ENCODE measurements at regions of chr19 and their contacts with region 1.

Region 1: GRCh38 chr19:7098701-7099596 is 29.4 kb downstream of the ZNF557 start:
- DNase-seq: peak; percentile 72 to 93 (median 90)
- ATAC-seq: peak; percentile 95
- H3K4me3 ChIP-seq: peak overlapping the region; percentile 98
- H3K4me3 Mint-ChIP-seq: peak overlapping the region; percentile 90 to 97 (median 93)
- H3K27ac ChIP-seq: peak overlapping the region; percentile 79
- H3K27ac Mint-ChIP-seq: peak overlapping the region; percentile 88 to 98 (median 94)
- H3K4me1 ChIP-seq: peaks cover 6 to 17% of the 10 kb centered on the region in 2 donors
- H3K4me1 Mint-ChIP-seq: peaks cover 11 to 41% (median 30%) of the 10 kb centered on the region in 7 donors
- H3K27me3 ChIP-seq: no peaks in the 10 kb centered on the region
- H3K27me3 Mint-ChIP-seq: peaks cover 0 to 8% (median 0%) of the 10 kb centered on the region in 5 donors

Region 2: GRCh38 chr19:6424939-6425731 is 673.8 kb before region 1 on chr19:
- CTCF ChIA-PET with region 1: no interaction called
- POLR2A ChIA-PET with region 1: interaction called, 3 read pairs
- intact Hi-C with region 1: loop called in 1 of 2 experiments (anchors 2 kb)
- DNase-seq: peak; percentile 66 to 100 (median 99)
- ATAC-seq: peak; percentile 89
- H3K4me3 ChIP-seq: peak overlapping the region; percentile 39
- H3K4me3 Mint-ChIP-seq: peak overlapping the region; percentile 69 to 87 (median 78)
- H3K27ac ChIP-seq: peak overlapping the region; percentile 77
- H3K27ac Mint-ChIP-seq: peak overlapping the region; percentile 78 to 97 (median 94)
- H3K4me1 ChIP-seq: peaks cover 15 to 32% of the 10 kb centered on the region in 2 donors
- H3K4me1 Mint-ChIP-seq: peaks cover 18 to 48% (median 41%) of the 10 kb centered on the region in 7 donors
- H3K27me3 ChIP-seq: no peaks in the 10 kb centered on the region
- H3K27me3 Mint-ChIP-seq: no peaks in the 10 kb centered on the region

Region 3: DNA sequence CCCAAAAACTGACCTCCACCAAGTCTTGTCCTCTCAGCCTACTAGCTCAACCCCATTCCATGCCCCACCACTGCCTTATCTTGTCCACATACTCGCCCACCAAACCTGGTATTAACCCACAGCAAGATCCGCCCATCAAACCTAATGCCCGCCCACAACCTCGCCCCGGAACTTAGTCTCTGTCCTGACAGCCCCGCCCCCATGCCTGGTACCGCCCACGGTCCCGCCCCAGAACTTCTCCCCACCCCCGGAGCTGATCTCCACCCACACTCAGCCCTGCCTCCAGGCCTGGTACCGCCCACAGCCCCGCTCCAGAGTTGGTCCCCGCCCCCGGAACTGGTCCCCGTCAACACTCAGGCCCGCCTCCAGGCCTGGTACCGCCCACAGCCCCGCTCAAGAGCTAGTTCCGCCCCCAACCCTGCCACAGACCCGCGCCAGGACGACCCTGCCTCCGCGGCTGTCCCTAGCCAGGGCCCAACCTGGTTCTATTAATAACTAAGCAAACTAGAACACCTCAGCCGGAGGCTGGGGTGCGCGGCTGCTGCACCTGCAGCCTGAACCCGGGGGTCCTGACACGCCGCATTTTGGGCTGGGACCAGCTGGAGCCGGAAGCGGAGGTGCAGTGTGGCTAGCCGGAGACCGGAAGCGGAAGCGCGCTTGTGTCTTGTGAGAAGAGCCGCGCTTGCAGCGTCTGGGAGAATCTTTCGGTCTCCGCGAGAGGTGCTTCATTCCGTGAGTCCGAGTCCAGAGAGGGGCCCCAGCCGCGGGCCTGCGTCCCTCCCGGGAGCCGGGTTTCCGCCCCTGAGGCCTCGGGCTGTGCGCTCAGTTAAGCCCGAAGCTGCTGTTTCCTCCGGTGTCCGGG is 29.7 kb before region 1 on chr19 and contains the start of gene ZNF557:
- CTCF ChIA-PET with region 1: interaction called, 3 read pairs
- POLR2A ChIA-PET with region 1: interaction called, 17 read pairs
- intact Hi-C with region 1: loop called (anchors 1 kb)
- DNase-seq: peak; percentile 93 to 100 (median 99)
- ATAC-seq: peak; percentile 99
- H3K4me3 ChIP-seq: peak within 1 kb of the TSS; percentile 100
- H3K4me3 Mint-ChIP-seq: peak within 1 kb of the TSS; percentile 90 to 98 (median 94)
- H3K27ac ChIP-seq: peak within 1 kb of the TSS; percentile 84
- H3K27ac Mint-ChIP-seq: peak within 1 kb of the TSS; percentile 63 to 95 (median 94)
- H3K4me1 ChIP-seq: peaks cover 14% of the 10 kb centered on the region in 2 donors
- H3K4me1 Mint-ChIP-seq: peaks cover 7 to 40% (median 19%) of the 10 kb centered on the region in 7 donors
- H3K27me3 ChIP-seq: no peaks in the 10 kb centered on the region
- H3K27me3 Mint-ChIP-seq: no peaks in the 10 kb centered on the region
- total RNA-seq, gene ZNF557: 11.7 to 36.2 (median 20.0) TPM

Region 4: DNA sequence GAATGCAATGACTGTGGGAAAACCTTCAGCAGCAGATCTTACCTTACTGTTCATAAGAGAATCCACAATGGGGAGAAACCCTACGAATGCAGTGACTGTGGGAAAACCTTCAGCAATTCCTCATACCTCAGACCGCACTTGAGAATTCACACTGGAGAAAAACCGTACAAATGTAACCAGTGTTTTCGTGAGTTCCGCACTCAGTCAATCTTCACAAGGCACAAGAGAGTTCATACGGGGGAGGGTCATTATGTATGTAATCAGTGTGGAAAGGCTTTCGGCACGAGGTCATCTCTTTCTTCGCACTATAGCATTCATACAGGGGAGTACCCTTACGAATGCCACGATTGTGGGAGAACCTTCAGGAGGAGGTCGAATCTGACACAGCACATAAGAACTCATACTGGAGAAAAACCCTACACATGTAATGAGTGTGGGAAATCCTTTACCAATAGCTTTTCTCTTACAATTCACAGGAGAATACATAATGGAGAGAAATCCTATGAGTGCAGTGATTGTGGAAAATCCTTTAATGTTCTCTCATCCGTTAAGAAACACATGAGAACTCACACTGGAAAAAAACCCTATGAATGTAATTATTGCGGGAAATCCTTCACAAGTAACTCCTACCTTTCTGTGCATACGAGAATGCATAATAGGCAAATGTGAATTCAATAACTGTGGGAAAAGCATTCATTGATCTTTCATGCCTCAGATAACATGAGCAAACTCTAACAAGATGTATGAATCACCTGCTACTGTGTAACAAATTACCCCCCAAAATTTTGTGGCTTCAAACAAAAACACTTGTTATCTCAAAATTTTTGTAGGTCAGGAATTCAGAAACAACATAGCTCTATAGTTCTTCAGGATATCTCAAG is 15.6 kb before region 1 on chr19:
- CTCF ChIA-PET with region 1: no interaction called
- POLR2A ChIA-PET with region 1: interaction called, 10 read pairs
- intact Hi-C with region 1: loop called (anchors 2 kb)
- DNase-seq: peak in 2 of 9 donors; percentile 20 to 26
- ATAC-seq: no peak
- H3K4me3 ChIP-seq: peak overlapping the region; percentile 1
- H3K4me3 Mint-ChIP-seq: peak overlapping the region in 4 of 10 donors; percentile 9 to 60 (median 39)
- H3K27ac ChIP-seq: no peak overlapping the region
- H3K27ac Mint-ChIP-seq: peak overlapping the region in 5 of 9 donors; percentile 1 to 75 (median 53)
- H3K4me1 ChIP-seq: no peaks in the 10 kb centered on the region
- H3K4me1 Mint-ChIP-seq: peaks cover 0 to 12% (median 3%) of the 10 kb centered on the region in 7 donors
- H3K27me3 ChIP-seq: no peaks in the 10 kb centered on the region
- H3K27me3 Mint-ChIP-seq: no peaks in the 10 kb centered on the region

Region 5: DNA sequence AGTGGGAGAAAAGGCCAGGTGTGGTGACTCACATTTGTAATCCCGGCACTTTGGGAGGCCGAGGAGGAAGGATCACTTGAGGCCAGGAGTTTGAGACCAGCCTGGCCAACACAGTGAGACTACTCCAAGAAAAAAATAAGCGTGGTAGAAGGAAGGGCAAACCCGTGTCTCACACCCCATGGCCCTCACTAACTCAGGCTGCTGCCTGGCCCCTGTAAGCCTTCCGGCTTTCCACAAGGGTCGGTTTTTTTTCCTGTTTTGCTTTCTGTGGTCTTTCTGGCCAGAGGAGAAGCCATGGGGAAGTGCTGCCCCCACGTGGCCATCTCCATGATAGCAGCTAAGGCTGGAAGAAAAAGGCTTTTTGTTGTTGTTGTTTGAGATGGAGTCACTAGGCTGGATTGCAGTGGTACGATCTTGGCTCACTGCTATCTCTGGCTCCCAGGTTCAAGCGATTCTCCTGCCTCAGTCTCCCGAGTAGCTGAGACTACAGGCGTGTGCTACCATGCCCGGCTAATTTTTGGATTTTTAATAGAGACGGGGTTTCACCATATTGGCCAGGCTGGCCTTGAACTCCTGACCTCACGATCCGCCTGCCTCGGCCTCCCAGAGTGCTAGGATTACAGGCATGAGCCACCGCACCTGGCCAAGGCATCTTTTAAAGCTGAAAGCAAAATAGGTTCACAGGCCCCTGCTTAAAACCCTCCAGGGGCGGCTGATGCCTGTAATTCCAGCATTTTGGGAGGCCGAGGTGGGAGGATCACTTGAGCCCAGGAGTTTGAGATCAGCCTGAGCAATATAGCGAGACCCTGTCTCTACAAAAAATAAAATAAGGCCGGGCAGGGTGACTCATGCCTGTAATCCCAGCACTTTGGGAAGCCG is 242.2 kb after region 1 on chr19:
- CTCF ChIA-PET with region 1: interaction called, 5 read pairs
- POLR2A ChIA-PET with region 1: no interaction called
- intact Hi-C with region 1: loop called (anchors 1 to 2 kb)
- DNase-seq: peak; percentile 65 to 91 (median 77)
- ATAC-seq: peak; percentile 60
- H3K4me3 ChIP-seq: no peak overlapping the region
- H3K4me3 Mint-ChIP-seq: peak overlapping the region in 7 of 10 donors; percentile 11 to 74 (median 39)
- H3K27ac ChIP-seq: no peak overlapping the region
- H3K27ac Mint-ChIP-seq: peak overlapping the region; percentile 14 to 95 (median 86)
- H3K4me1 ChIP-seq: peaks cover 37 to 39% of the 10 kb centered on the region in 2 donors
- H3K4me1 Mint-ChIP-seq: peaks cover 29 to 64% (median 59%) of the 10 kb centered on the region in 7 donors
- H3K27me3 ChIP-seq: no peaks in the 10 kb centered on the region
- H3K27me3 Mint-ChIP-seq: peaks cover 0 to 12% (median 0%) of the 10 kb centered on the region in 5 donors

Region 6: DNA sequence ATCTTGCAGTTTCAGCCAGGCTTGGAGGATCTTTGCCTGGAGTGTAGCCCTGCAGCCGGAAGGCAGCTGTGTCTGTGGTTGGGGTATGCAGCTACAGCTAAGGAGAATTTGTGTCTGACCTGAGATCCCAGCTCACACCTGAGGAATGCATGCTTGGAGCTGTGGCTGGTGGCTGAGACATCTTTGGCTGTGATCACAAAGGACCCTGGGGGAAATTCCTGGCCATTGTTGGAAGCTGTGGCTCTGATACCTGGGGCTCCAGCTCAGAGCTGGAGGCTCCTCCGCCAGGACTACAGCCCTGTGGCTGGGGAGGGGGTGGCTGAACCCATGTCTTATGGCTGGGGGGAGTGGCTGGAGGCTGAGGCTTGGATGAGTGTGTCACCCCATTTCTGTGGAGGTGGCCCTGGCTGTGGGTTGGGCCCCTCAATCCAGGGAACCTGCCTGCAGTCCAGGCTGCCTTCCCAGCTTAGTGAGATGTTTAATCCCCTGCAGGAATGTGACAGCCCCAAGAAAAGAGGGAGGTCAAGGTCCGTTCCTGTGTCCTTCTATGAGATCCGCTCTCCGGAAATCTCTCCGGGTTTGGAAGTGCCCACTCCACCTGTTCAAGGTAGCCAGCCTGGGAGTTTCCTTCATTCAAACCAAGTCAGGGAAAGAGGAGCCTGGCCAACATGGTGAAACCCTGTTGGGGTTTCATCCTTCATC is 277.4 kb after region 1 on chr19:
- CTCF ChIA-PET with region 1: interaction called, 4 read pairs
- POLR2A ChIA-PET with region 1: no interaction called
- intact Hi-C with region 1: loop called in 1 of 2 experiments (anchors 1 kb)
- DNase-seq: no peak
- ATAC-seq: no peak
- H3K4me3 ChIP-seq: no peak overlapping the region
- H3K4me3 Mint-ChIP-seq: no peak overlapping the region
- H3K27ac ChIP-seq: no peak overlapping the region
- H3K27ac Mint-ChIP-seq: peak overlapping the region in 3 of 9 donors; percentile 55 to 76 (median 69)
- H3K4me1 ChIP-seq: no peaks in the 10 kb centered on the region
- H3K4me1 Mint-ChIP-seq: peaks cover 0 to 33% (median 16%) of the 10 kb centered on the region in 7 donors
- H3K27me3 ChIP-seq: no peaks in the 10 kb centered on the region
- H3K27me3 Mint-ChIP-seq: no peaks in the 10 kb centered on the region

Region 7: DNA sequence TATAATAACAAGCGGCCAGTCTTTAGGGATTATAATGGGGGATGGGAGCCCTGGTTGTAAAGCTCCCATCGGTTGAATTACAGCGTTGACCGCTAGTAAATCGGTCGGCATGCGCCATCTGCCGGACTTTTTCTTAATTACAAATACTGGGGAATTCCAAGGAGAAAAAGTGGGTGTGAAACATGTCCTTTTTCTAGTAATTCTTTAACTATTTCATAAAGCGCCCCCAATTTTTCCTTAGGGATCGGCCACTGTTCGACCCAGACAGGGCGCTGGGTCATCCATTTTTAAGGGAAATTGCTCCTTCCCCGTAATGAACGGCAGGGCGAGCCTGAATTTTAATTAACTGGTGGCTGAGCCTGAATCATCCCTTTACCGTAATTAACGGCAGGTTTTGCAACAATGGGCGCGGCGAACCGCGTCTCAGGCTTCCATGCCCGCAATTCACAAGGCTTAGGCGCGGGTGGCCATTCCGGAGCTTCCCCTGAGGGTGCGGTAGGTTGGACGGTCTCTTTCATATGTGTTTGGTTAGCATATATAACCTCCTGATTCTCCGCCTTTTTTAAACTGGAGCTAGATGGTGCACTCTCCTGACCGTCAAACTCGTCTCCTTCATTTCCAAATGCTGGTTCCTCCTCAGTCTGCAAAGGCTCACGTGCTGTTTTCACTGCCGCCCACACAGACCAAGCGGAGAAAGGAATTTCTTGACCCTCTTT is 700.8 kb after region 1 on chr19:
- CTCF ChIA-PET with region 1: interaction called, 8 read pairs
- POLR2A ChIA-PET with region 1: no interaction called
- intact Hi-C with region 1: loop called (anchors 1 to 2 kb)
- DNase-seq: peak; percentile 13 to 61 (median 39)
- ATAC-seq: peak; percentile 71
- H3K4me3 ChIP-seq: no peak overlapping the region
- H3K4me3 Mint-ChIP-seq: peak overlapping the region in 1 of 10 donors; percentile 23
- H3K27ac ChIP-seq: no peak overlapping the region
- H3K27ac Mint-ChIP-seq: peak overlapping the region in 1 of 9 donors; percentile 63
- H3K4me1 ChIP-seq: no peaks in the 10 kb centered on the region
- H3K4me1 Mint-ChIP-seq: peaks cover 0 to 8% (median 6%) of the 10 kb centered on the region in 7 donors
- H3K27me3 ChIP-seq: no peaks in the 10 kb centered on the region
- H3K27me3 Mint-ChIP-seq: peaks cover 0 to 44% (median 11%) of the 10 kb centered on the region in 5 donors

Region 8: GRCh38 chr19:8569066-8569771 is 1470.3 kb after region 1 on chr19:
- CTCF ChIA-PET with region 1: no interaction called
- POLR2A ChIA-PET with region 1: no interaction called
- intact Hi-C with region 1: no loop called
- DNase-seq: peak in 3 of 9 donors; percentile 19 to 71 (median 36)
- ATAC-seq: peak; percentile 76
- H3K4me3 ChIP-seq: peak overlapping the region; percentile 44
- H3K4me3 Mint-ChIP-seq: peak overlapping the region; percentile 66 to 88 (median 74)
- H3K27ac ChIP-seq: peak overlapping the region; percentile 59
- H3K27ac Mint-ChIP-seq: peak overlapping the region; percentile 88 to 98 (median 92)
- H3K4me1 ChIP-seq: peaks cover 46 to 72% of the 10 kb centered on the region in 2 donors
- H3K4me1 Mint-ChIP-seq: peaks cover 32 to 80% (median 64%) of the 10 kb centered on the region in 7 donors
- H3K27me3 ChIP-seq: no peaks in the 10 kb centered on the region
- H3K27me3 Mint-ChIP-seq: peaks cover 0 to 2% (median 0%) of the 10 kb centered on the region in 5 donors

Measured in naive thymus-derived CD4-positive, alpha-beta T cell (primary cell).